ENCODE measurements at regions of chr3 and their contacts with region 1.

Region 1: GRCh38 chr3:122299872-122300460 is 25.1 kb upstream of the CSTA start:
- DNase-seq: peak in 7 of 9 donors; percentile 11 to 61 (median 45)
- ATAC-seq: peak; percentile 68
- H3K4me3 ChIP-seq: no peak overlapping the region
- H3K4me3 Mint-ChIP-seq: no peak overlapping the region
- H3K27ac ChIP-seq: no peak overlapping the region
- H3K27ac Mint-ChIP-seq: peak overlapping the region in 1 of 9 donors; percentile 49
- H3K4me1 ChIP-seq: peaks cover 0 to 5% of the 10 kb centered on the region in 2 donors
- H3K4me1 Mint-ChIP-seq: peaks cover 0 to 11% (median 4%) of the 10 kb centered on the region in 7 donors
- H3K27me3 ChIP-seq: no peaks in the 10 kb centered on the region
- H3K27me3 Mint-ChIP-seq: peaks cover 0 to 4% (median 2%) of the 10 kb centered on the region in 5 donors

Region 2: GRCh38 chr3:122271246-122271898 is 28.6 kb before region 1 on chr3:
- CTCF ChIA-PET with region 1: interaction called, 3 read pairs
- POLR2A ChIA-PET with region 1: no interaction called
- intact Hi-C with region 1: loop called in 1 of 2 experiments (anchors 1 kb)
- DNase-seq: peak in 7 of 9 donors; percentile 32 to 72 (median 61)
- ATAC-seq: peak; percentile 85
- H3K4me3 ChIP-seq: no peak overlapping the region
- H3K4me3 Mint-ChIP-seq: peak overlapping the region in 9 of 10 donors; percentile 22 to 66 (median 41)
- H3K27ac ChIP-seq: no peak overlapping the region
- H3K27ac Mint-ChIP-seq: peak overlapping the region in 5 of 9 donors; percentile 0 to 13 (median 8)
- H3K4me1 ChIP-seq: peaks cover 20 to 30% of the 10 kb centered on the region in 2 donors
- H3K4me1 Mint-ChIP-seq: peaks cover 19 to 44% (median 32%) of the 10 kb centered on the region in 7 donors
- H3K27me3 ChIP-seq: no peaks in the 10 kb centered on the region
- H3K27me3 Mint-ChIP-seq: peaks cover 0 to 5% (median 0%) of the 10 kb centered on the region in 5 donors

Region 3: GRCh38 chr3:122468896-122469533 is 169.0 kb after region 1 on chr3:
- CTCF ChIA-PET with region 1: no interaction called
- POLR2A ChIA-PET with region 1: no interaction called
- intact Hi-C with region 1: no loop called
- DNase-seq: no peak
- ATAC-seq: no peak
- H3K4me3 ChIP-seq: no peak overlapping the region
- H3K4me3 Mint-ChIP-seq: peak overlapping the region in 6 of 10 donors; percentile 22 to 55 (median 42)
- H3K27ac ChIP-seq: no peak overlapping the region
- H3K27ac Mint-ChIP-seq: peak overlapping the region in 7 of 9 donors; percentile 18 to 89 (median 56)
- H3K4me1 ChIP-seq: peaks cover 7 to 25% of the 10 kb centered on the region in 2 donors
- H3K4me1 Mint-ChIP-seq: peaks cover 31 to 68% (median 63%) of the 10 kb centered on the region in 7 donors
- H3K27me3 ChIP-seq: no peaks in the 10 kb centered on the region
- H3K27me3 Mint-ChIP-seq: no peaks in the 10 kb centered on the region